ENCODE measurements at regions of chr4 and their contacts with region 1.

Region 1: GRCh38 chr4:117466388-117466787 is 381.0 kb upstream of the TRAM1L1 start:
- DNase-seq: no peak
- H3K4me3 ChIP-seq: no peak overlapping the region
- H3K27ac ChIP-seq: no peak overlapping the region
- H3K4me1 ChIP-seq: no peaks in the 10 kb centered on the region
- H3K27me3 ChIP-seq: no peaks in the 10 kb centered on the region
- CTCF ChIP-seq: no peak

Region 2: DNA sequence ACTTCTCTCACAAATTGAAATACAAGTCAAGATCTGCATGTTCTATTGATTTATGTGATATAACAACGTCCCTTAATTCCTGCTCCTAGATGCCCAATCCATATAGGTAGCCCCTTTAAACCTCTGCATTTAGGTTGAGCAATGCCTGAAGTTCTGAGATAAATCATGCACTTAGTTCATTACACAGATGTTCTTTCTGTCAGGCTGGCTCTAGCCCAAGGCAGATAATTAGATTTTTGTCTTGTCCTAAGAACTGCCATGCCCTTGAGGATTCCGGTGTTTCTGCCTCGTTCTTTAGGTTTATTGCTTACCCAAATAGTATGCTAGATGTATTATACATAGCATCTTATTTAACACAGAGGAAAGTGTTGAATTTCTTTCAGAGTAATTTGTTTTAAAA is 524.1 kb before region 1 on chr4:
- CTCF ChIA-PET with region 1: no interaction called
- POLR2A ChIA-PET with region 1: no interaction called
- intact Hi-C with region 1: no loop called
- DNase-seq: no peak
- H3K4me3 ChIP-seq: no peak overlapping the region
- H3K27ac ChIP-seq: no peak overlapping the region
- H3K4me1 ChIP-seq: no peaks in the 10 kb centered on the region
- H3K27me3 ChIP-seq: no peaks in the 10 kb centered on the region
- CTCF ChIP-seq: no peak

Region 3: GRCh38 chr4:117134386-117134785 is 332.0 kb before region 1 on chr4:
- CTCF ChIA-PET with region 1: no interaction called
- POLR2A ChIA-PET with region 1: no interaction called
- intact Hi-C with region 1: no loop called
- DNase-seq: peak; percentile 29 to 36
- H3K4me3 ChIP-seq: no peak overlapping the region
- H3K27ac ChIP-seq: no peak overlapping the region
- H3K4me1 ChIP-seq: no peaks in the 10 kb centered on the region
- H3K27me3 ChIP-seq: no peaks in the 10 kb centered on the region
- CTCF ChIP-seq: peak; percentile 67

Region 4: DNA sequence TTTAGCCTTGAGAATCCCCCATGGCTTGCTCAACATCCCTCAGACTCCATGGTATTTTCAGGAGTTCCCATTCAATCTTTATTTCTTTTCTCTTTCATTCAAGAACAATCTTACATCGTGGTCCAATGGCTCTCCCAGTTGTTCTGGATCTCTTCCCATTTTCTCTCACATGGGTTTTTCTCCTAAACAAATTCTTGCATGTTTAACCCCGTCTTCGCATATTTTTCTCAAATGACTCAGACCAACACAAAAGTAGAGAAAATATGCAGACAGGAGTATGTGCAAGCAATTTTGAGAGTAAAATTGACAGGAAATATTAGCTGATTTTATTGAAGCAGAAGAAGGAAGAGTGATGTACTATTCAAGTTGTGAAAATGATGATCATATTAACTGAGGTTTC is 15.4 kb after region 1 on chr4:
- CTCF ChIA-PET with region 1: no interaction called
- POLR2A ChIA-PET with region 1: interaction called, 10 read pairs
- intact Hi-C with region 1: no loop called
- DNase-seq: no peak
- H3K4me3 ChIP-seq: no peak overlapping the region
- H3K27ac ChIP-seq: no peak overlapping the region
- H3K4me1 ChIP-seq: no peaks in the 10 kb centered on the region
- H3K27me3 ChIP-seq: no peaks in the 10 kb centered on the region
- CTCF ChIP-seq: no peak

Region 5: DNA sequence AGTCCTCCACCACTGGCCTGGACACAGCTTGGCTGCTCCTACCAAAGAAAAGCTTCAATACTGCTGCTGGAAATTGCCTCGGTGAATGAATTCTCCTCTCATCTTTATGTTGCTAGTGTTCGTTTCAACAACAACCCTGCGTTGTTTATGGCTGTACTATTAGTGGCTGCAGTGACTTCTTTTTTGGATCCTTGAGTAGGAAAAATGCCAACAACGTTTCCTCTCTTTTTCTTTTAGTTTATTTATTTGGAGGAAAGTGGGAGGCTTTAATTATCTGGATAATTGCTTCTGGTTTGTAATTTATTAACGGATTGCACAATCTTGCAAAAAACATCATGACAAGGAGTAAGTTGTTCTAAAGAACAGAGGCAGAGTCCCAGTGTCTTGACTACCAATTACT is 83.1 kb after region 1 on chr4:
- CTCF ChIA-PET with region 1: no interaction called
- POLR2A ChIA-PET with region 1: no interaction called
- intact Hi-C with region 1: no loop called
- DNase-seq: no peak
- H3K4me3 ChIP-seq: no peak overlapping the region
- H3K27ac ChIP-seq: no peak overlapping the region
- H3K4me1 ChIP-seq: no peaks in the 10 kb centered on the region
- H3K27me3 ChIP-seq: no peaks in the 10 kb centered on the region
- CTCF ChIP-seq: no peak

Measured in PC-9 (cell line).